PC-3 (cell line): ENCODE measurements at regions of chr11 and their contacts with region 1.

Region 1: DNA sequence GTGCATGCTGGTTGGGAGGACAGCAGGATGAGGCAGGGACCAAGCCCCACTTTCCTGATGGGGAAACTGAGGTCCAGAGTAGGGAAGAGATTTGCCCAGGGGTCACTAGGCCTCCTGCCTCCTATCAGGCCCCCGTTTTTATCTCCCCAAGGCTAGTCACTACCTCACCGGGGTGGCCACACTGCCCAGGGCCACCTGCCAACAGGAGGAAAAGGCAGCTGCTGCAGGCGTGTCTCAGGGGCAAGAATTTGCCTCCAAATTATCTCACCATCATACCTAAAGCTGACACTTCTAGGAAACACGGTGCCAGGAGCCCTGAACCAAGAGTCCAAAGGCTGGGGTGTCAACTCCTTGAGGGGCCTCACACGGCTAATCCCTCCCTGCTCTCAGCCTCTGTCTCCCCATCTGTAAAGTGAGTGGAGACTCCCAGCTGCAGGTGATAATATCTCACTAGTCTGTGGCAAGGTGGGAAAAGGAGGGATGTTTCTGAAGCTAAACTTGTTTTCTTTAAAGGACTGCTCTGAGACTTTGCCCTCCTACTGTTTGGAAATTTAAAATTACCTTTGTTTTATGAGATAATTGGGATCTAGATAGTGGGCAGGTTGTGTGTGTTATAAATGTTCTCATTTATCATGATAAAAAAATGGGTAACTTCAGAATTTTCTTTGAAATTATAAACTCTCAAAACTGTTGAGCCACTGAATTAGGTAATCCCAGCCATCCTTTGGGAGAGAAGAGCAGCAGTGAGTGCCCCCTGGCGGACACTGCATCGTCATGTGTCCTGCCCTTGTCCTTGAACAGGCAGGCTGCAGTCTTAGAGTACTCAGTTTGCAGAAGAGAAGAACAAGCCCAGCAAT is 60.0 kb downstream of the MYO7A start:
- DNase-seq: peak; percentile 88
- ATAC-seq: peak; percentile 68
- H3K4me3 ChIP-seq: no peak overlapping the region
- H3K27ac ChIP-seq: no peak overlapping the region
- H3K4me1 ChIP-seq: peaks cover 8% of the 10 kb centered on the region; the same call in 1 of the 2 replicates
- H3K27me3 ChIP-seq: peaks cover 20% of the 10 kb centered on the region
- CTCF ChIP-seq: peak; percentile 98

Region 2: GRCh38 chr11:77082838-77083562 is 105.0 kb before region 1 on chr11:
- CTCF ChIA-PET with region 1: no interaction called
- POLR2A ChIA-PET with region 1: no interaction called
- intact Hi-C with region 1: no loop called
- DNase-seq: no peak
- ATAC-seq: no peak
- H3K4me3 ChIP-seq: no peak overlapping the region
- H3K27ac ChIP-seq: no peak overlapping the region
- H3K4me1 ChIP-seq: peaks cover under 1% of the 10 kb centered on the region; the same call in 1 of the 2 replicates
- H3K27me3 ChIP-seq: no peaks in the 10 kb centered on the region
- CTCF ChIP-seq: no peak

Region 3: GRCh38 chr11:77127232-77127911 is 60.6 kb before region 1 on chr11:
- CTCF ChIA-PET with region 1: interaction called, 3 read pairs
- POLR2A ChIA-PET with region 1: no interaction called
- intact Hi-C with region 1: loop called (anchors 1 kb)
- DNase-seq: peak; percentile 50
- ATAC-seq: peak; percentile 77
- H3K4me3 ChIP-seq: peak overlapping the region; percentile 68
- H3K27ac ChIP-seq: no peak overlapping the region
- H3K4me1 ChIP-seq: peaks cover 6% of the 10 kb centered on the region; the same call in 1 of the 2 replicates
- H3K27me3 ChIP-seq: no peaks in the 10 kb centered on the region
- CTCF ChIP-seq: peak; percentile 99

Region 4: GRCh38 chr11:77309401-77310085 is 121.5 kb after region 1 on chr11:
- CTCF ChIA-PET with region 1: no interaction called
- POLR2A ChIA-PET with region 1: no interaction called
- intact Hi-C with region 1: loop called (anchors 10 kb)
- DNase-seq: no peak
- ATAC-seq: no peak
- H3K4me3 ChIP-seq: no peak overlapping the region
- H3K27ac ChIP-seq: no peak overlapping the region
- H3K4me1 ChIP-seq: peaks cover 4% of the 10 kb centered on the region; the same call in 1 of the 2 replicates
- H3K27me3 ChIP-seq: no peaks in the 10 kb centered on the region
- CTCF ChIP-seq: no peak

Region 5: GRCh38 chr11:77351281-77351906 is 163.4 kb after region 1 on chr11:
- CTCF ChIA-PET with region 1: no interaction called
- POLR2A ChIA-PET with region 1: no interaction called
- intact Hi-C with region 1: no loop called
- DNase-seq: no peak
- ATAC-seq: no peak
- H3K4me3 ChIP-seq: no peak overlapping the region
- H3K27ac ChIP-seq: no peak overlapping the region
- H3K4me1 ChIP-seq: no peaks in the 10 kb centered on the region
- H3K27me3 ChIP-seq: no peaks in the 10 kb centered on the region
- CTCF ChIP-seq: no peak

Region 6: DNA sequence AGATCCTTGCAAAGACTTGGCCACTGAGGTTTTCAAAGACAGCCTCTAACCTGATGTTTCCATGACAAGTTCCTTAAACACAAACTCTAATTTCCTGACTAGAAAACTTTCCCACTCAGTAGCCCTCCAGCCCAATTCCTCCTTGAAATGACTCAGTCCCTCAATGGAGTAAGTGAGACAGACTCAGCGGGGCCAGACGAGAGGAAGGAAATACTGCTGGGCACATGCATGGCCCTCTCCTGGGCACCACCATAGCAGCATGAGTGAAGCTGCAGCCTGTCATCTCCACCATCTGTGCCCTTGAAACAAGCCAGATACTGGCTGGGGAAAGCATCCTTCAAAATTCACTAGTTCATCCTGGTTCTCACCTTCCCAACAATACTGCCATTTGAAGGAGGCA is 189.7 kb after region 1 on chr11:
- CTCF ChIA-PET with region 1: no interaction called
- POLR2A ChIA-PET with region 1: no interaction called
- intact Hi-C with region 1: no loop called
- DNase-seq: no peak
- ATAC-seq: no peak
- H3K4me3 ChIP-seq: no peak overlapping the region
- H3K27ac ChIP-seq: no peak overlapping the region
- H3K4me1 ChIP-seq: peaks cover 41% of the 10 kb centered on the region
- H3K27me3 ChIP-seq: no peaks in the 10 kb centered on the region
- CTCF ChIP-seq: no peak

Region 7: DNA sequence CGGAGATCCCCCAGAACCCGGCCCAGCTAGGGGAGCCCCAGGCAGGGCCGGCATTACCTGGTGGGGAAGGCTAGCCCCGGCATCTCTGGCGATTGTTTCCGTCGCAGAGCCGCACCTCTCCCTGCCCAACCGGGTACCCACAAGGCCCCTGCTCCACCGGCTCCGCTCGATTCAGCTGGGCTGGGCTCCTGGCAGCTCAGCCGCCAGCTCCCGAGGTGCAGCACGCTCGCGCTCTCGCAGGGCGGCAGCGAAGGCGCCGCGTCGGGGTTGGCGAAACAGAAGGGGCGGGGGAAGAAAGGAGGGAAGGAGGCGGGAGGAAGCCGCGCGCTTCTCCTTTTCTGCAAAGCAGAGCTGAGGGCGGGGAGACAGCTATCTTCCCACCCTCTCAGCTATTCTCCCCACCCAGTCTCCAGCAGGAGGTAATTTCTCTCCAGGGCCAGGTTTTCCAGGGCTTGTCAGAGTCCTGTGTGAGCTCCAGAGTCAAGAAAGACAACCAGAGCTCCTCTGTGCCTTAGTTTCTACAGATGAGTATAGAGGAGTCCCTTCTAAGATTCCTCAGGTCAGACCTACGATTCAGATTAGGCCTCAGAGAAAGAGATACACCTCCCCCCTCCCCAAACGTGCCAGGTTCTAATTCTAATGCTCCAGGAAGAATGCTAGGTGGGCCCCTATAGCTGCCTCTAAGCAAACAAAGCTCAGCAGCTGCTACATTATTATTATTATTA is 223.9 kb after region 1 on chr11:
- CTCF ChIA-PET with region 1: interaction called, 3 read pairs
- POLR2A ChIA-PET with region 1: no interaction called
- intact Hi-C with region 1: loop called (anchors 10 kb)
- DNase-seq: peak; percentile 87
- ATAC-seq: peak; percentile 68
- H3K4me3 ChIP-seq: peak overlapping the region; percentile 63
- H3K27ac ChIP-seq: no peak overlapping the region
- H3K4me1 ChIP-seq: peaks cover 33% of the 10 kb centered on the region
- H3K27me3 ChIP-seq: no peaks in the 10 kb centered on the region
- CTCF ChIP-seq: no peak

Region 8: GRCh38 chr11:77473801-77474683 is 286.0 kb after region 1 on chr11 and contains the start of gene PAK1:
- CTCF ChIA-PET with region 1: no interaction called
- POLR2A ChIA-PET with region 1: no interaction called
- intact Hi-C with region 1: loop called (anchors 5 kb)
- DNase-seq: peak; percentile 69
- ATAC-seq: peak; percentile 73
- H3K4me3 ChIP-seq: peak within 1 kb of the TSS; percentile 69
- H3K27ac ChIP-seq: no peak within 1 kb of the TSS
- H3K4me1 ChIP-seq: peaks cover 20% of the 10 kb centered on the region
- H3K27me3 ChIP-seq: peaks cover 16% of the 10 kb centered on the region
- CTCF ChIP-seq: peak; percentile 29; the same call in 1 of the 2 replicates
- total RNA-seq, gene PAK1: 26.1 and 29.8 TPM in 2 replicates

Region 9: GRCh38 chr11:77557554-77557953 is 369.6 kb after region 1 on chr11:
- CTCF ChIA-PET with region 1: interaction called, 5 read pairs
- POLR2A ChIA-PET with region 1: no interaction called
- intact Hi-C with region 1: loop called (anchors 1 kb)
- DNase-seq: peak; percentile 57
- ATAC-seq: peak; percentile 70
- H3K4me3 ChIP-seq: no peak overlapping the region
- H3K27ac ChIP-seq: no peak overlapping the region
- H3K4me1 ChIP-seq: peaks cover 13% of the 10 kb centered on the region
- H3K27me3 ChIP-seq: no peaks in the 10 kb centered on the region
- CTCF ChIP-seq: peak; percentile 64